ENCODE measurements at regions of chr20 and their contacts with region 1.

Region 1: DNA sequence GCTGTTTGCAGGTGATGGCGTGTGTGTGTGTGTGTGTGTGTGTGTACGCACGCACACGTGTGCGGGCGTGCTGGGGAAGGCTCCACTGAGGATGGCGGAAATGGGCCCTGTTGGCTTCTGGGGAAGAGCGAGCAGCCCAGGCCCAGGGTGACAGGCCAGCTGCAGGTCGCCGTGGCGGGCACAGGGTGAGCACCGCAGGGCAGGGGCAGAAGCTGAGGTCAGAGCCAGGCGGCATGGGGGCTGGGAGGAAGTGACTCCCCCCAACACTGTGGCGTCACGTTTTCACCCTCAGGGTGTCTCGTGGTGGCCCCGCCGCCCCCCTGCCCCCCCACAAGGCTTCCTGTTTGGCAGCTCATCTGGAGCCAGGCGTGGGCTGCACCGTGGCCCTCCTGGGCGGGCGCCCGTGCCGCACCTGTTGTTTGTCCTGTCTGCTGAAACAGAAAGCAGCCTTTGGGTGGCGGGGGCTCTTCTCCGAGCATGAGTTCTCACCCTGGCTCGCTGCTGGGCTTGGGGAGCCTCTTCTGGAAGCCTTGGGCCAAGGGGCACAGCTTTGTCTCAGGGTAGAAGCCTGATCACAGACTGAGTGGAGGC is 7.1 kb downstream of the RBM38 start:
- DNase-seq: peak; percentile 78
- ATAC-seq: peak; percentile 64
- H3K4me3 Mint-ChIP-seq: peak overlapping the region; percentile 78
- H3K27ac Mint-ChIP-seq: peak overlapping the region; percentile 97
- H3K4me1 Mint-ChIP-seq: peaks cover 100% of the 10 kb centered on the region
- H3K27me3 Mint-ChIP-seq: no peaks in the 10 kb centered on the region
- CTCF ChIP-seq: no peak

Region 2: GRCh38 chr20:56392282-56393137 is 1005.8 kb before region 1 on chr20 and contains the start of gene CSTF1:
- CTCF ChIA-PET with region 1: no interaction called
- POLR2A ChIA-PET with region 1: interaction called, 4 read pairs
- intact Hi-C with region 1: loop called (anchors 2 kb)
- DNase-seq: peak; percentile 96
- ATAC-seq: peak; percentile 93
- H3K4me3 Mint-ChIP-seq: no peak within 1 kb of the TSS
- H3K27ac Mint-ChIP-seq: no peak within 1 kb of the TSS
- H3K4me1 Mint-ChIP-seq: peaks cover 22% of the 10 kb centered on the region
- H3K27me3 Mint-ChIP-seq: no peaks in the 10 kb centered on the region
- CTCF ChIP-seq: no peak
- total RNA-seq, gene CSTF1: 31.4 and 36.2 TPM in 2 replicates

Region 3: DNA sequence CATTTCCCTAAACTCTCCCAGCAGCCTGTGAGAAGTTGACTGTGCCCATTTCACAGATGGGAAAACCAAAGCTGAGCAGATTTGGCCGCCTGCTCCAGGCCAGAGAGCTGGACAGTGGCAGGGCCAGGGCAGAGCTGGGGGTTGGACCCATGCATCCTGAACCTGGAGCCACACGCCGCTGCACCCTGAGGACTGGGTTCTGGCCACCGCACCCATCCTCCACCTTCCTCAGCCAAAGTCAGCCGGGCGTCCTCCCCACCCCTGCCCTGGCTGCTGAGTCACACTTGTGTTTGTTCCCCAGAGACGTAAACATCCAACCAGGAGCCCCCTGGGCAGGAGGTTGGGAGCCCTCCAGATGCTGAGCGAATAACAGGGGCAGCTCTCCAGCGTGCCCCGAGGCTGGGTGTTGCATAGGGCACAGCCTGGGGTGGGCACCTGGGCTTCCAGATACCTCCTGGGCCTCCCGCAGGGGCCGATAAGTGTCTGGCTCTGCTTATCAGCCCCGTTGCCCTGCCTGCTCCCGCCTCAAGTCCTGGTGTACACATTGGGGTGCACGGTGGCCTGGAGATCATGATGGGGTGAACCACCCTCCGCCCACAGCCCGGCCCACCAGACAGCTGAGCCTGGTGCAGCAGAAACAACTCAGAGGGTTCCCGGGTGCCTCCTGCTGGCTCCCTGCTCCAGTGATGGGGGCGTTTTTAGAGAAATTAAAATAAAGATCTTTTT is 16.7 kb after region 1 on chr20:
- CTCF ChIA-PET with region 1: interaction called, 3 read pairs
- POLR2A ChIA-PET with region 1: interaction called, 15 read pairs
- intact Hi-C with region 1: no loop called
- DNase-seq: no peak
- ATAC-seq: no peak
- H3K4me3 Mint-ChIP-seq: no peak overlapping the region
- H3K27ac Mint-ChIP-seq: no peak overlapping the region
- H3K4me1 Mint-ChIP-seq: peaks cover 14% of the 10 kb centered on the region
- H3K27me3 Mint-ChIP-seq: no peaks in the 10 kb centered on the region
- CTCF ChIP-seq: no peak

Region 4: GRCh38 chr20:57432874-57433491 is 34.7 kb after region 1 on chr20:
- CTCF ChIA-PET with region 1: interaction called, 36 read pairs
- POLR2A ChIA-PET with region 1: interaction called, 112 read pairs
- intact Hi-C with region 1: loop called (anchors 1 kb)
- DNase-seq: peak; percentile 53
- ATAC-seq: peak; percentile 75
- H3K4me3 Mint-ChIP-seq: peak overlapping the region; percentile 59
- H3K27ac Mint-ChIP-seq: peak overlapping the region; percentile 84
- H3K4me1 Mint-ChIP-seq: peaks cover 79% of the 10 kb centered on the region
- H3K27me3 Mint-ChIP-seq: no peaks in the 10 kb centered on the region
- CTCF ChIP-seq: no peak

Region 5: DNA sequence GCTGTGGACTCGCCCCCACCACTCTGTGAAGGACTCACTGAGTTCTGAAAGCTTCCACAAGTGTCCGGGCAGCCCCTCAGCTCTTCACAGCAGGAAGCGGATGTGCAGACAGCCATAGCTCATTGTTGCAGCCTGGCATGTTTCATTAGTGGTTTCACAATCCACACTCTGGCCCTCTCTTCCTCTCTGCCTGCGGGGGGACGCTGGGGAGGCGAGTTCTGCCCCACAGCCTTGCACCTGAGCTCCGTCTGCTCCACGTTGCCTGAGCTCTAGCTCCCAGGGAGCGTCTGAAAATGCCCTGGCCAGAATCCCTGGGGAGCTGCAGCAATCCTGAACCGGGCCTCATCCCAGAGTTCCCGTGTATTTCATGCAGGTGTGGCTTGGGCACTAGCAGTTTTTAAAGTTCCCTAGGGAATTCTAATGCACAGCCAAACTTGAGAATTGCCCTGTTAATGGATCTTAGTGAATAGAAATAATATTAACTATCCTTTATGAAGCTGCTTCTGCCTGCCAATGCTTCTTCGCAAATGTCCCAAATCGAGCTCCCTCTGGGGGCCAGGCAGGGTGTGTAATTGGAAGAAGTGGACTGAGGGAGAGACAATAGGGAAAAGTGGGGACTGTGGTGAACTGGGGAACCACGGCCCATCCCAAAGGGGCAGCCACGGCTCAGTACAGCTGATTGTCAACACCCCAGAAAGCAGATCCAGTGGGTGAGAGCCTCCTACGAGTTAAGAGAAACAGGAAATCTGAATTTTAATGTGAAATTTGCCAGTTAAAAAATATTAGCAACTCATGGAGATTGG is 75.1 kb after region 1 on chr20:
- CTCF ChIA-PET with region 1: interaction called, 18 read pairs
- POLR2A ChIA-PET with region 1: interaction called, 100 read pairs
- intact Hi-C with region 1: loop called (anchors 1 kb)
- DNase-seq: peak; percentile 24
- ATAC-seq: peak; percentile 66
- H3K4me3 Mint-ChIP-seq: peak overlapping the region; percentile 62
- H3K27ac Mint-ChIP-seq: peak overlapping the region; percentile 63
- H3K4me1 Mint-ChIP-seq: peaks cover 87% of the 10 kb centered on the region
- H3K27me3 Mint-ChIP-seq: peaks cover 5% of the 10 kb centered on the region
- CTCF ChIP-seq: no peak

Region 6: GRCh38 chr20:57493091-57493615 is 94.8 kb after region 1 on chr20:
- CTCF ChIA-PET with region 1: interaction called, 13 read pairs
- POLR2A ChIA-PET with region 1: interaction called, 8 read pairs
- intact Hi-C with region 1: loop called (anchors 1 kb)
- DNase-seq: no peak
- ATAC-seq: no peak
- H3K4me3 Mint-ChIP-seq: no peak overlapping the region
- H3K27ac Mint-ChIP-seq: no peak overlapping the region
- H3K4me1 Mint-ChIP-seq: peaks cover 35% of the 10 kb centered on the region
- H3K27me3 Mint-ChIP-seq: no peaks in the 10 kb centered on the region
- CTCF ChIP-seq: no peak

Measured in activated B cell treated with CpG ODN at 0.5 μM for 24 hours (primary cell).